Ascending aorta (tissue), 2 donors: ENCODE measurements at regions of chr3 and their contacts with region 1.

Region 1: DNA sequence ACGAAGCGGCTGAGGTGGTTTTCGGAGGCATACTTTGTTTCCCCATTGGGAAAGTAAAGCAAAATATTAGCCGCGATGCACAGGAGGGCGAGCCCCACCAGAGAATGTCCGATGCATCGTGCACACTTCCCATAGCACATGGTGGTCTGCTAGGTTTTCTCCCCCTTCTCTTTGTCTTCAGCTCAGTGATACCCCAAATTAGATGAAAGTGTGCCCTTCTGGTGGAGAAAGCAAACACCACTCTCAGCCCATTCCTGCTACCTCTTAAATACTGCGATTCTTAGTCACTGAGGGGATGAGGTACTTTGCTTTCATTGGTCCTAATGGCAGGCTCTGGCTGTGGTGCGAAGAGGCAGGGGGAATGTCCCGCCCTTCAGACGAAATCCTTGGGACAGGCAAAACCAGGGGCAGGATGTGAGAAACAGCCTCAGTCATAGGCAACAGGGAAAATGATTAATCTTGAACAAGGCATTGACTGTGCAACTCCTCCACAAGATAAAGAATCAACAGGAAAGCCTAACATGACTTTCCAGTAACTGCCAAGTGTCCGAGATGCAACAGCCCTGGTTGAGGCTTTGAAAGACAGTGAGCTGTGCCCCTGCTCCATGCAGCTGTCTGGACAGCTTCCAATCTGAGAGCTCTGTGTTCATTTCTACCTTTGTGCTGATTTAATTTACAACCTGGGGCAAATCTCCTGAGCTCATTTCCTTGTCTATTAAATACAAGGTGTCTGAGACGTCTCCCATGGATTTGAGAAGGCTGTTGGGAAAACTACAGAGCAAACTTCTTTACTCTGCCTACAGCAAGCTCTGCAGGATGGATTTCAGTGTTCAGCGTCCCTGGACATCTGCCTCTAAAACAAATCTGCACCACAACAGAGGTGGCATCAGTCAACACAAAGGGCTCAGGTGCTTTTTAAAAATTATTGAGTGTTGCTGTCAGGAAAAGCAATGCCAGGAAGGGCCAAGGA is at the start of gene TM4SF1:
- DNase-seq: peak; percentile 30 to 92
- H3K4me3 ChIP-seq: peak within 1 kb of the TSS; percentile 46 to 66
- H3K27ac ChIP-seq: peak within 1 kb of the TSS; percentile 74 to 83
- H3K4me1 ChIP-seq: peaks cover 14 to 40% of the 10 kb centered on the region in 2 donors
- H3K27me3 ChIP-seq: no peaks in the 10 kb centered on the region
- CTCF ChIP-seq: no peak
- total RNA-seq, gene TM4SF1: 487 TPM

Region 2: DNA sequence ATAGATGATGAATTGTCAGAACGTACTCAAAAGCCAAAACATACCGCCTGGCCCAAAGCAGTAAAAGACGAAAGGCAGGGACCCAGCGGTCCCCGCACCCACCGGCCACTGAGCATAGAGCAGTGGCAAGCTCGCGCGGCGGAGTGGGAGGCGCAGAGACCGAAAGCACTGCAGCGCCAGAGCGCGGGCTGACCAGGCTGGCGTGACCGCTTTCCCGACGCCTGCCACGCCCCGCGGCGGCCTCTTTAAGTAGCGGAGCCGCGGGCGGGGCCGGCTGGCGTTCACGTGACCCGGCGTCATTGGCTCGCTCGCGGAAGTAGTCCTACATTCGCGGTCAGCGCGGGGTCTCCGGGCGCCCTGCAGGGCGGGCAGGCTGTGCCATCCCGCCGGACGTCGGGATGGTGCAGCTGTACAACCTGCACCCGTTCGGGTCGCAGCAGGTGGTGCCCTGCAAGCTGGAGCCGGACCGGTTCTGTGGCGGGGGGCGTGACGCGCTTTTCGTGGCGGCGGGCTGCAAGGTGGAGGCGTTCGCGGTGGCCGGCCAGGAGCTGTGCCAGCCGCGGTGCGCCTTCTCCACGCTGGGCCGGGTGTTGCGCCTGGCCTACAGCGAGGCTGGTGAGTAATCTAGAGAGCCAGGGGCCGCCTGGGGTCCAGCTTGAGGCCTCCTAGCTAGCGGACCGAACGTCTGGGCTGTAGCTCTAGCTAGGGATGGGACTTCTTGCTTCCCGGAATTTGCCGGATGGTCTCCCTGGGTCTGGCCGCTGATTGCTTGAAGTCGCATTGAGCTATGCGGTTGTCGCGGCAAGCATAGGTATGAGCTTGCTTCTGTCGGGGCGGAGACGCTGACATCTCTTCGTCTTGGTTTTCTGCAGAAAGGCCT is 248.1 kb before region 1 on chr3 and contains the start of gene HPS3:
- intact Hi-C with region 1: loop called (anchors 10 kb)
- DNase-seq: peak; percentile 76 to 96
- H3K4me3 ChIP-seq: peak within 1 kb of the TSS; percentile 73 to 94
- H3K27ac ChIP-seq: peak within 1 kb of the TSS; percentile 87 to 89
- H3K4me1 ChIP-seq: peaks cover 0 to 12% of the 10 kb centered on the region in 2 donors
- H3K27me3 ChIP-seq: no peaks in the 10 kb centered on the region
- CTCF ChIP-seq: peak in 1 of 3 experiments; percentile 22
- total RNA-seq, gene HPS3: 18.9 TPM

Region 3: DNA sequence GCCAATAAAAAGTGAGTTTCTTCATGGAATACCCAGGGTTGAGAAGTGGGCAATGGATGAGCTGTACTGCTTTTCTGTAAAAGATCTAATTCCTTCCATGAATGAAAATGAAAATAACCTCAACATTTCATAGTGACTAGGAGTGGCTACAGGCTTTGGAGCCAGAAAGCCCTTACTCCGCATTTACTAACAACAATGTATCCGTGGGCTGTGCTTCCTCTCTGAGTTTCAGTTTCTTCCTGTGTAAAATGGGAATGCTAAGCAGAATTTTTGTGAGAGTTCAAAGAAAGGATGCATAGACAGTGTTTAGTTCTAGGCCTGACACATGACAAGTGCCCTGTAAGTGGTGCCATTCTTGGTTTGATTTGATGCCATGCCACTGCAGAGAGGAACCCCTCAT is 47.2 kb after region 1 on chr3:
- intact Hi-C with region 1: no loop called
- DNase-seq: no peak
- H3K4me3 ChIP-seq: no peak overlapping the region
- H3K27ac ChIP-seq: no peak overlapping the region
- H3K4me1 ChIP-seq: no peaks in the 10 kb centered on the region
- H3K27me3 ChIP-seq: no peaks in the 10 kb centered on the region
- CTCF ChIP-seq: no peak

Region 4: DNA sequence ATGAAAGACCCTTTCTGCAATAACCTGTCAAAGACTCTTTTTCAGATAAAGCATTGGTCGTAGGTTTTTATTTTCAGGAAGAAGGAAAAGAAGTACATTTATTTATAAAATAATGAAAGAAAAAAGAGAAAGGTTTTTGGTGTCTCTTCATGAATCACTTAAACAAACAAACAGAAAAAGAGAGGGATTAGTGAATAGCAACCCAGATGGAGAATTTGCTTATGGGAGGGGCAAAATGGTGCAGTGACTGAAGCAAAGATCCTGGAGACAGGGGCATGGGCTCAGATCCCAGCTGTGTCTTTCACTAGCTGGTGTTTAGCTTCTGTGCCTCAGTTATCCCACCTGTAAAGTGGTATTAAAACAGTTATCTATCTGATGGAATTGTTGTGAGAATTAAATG is 671.6 kb after region 1 on chr3:
- intact Hi-C with region 1: no loop called
- DNase-seq: no peak
- H3K4me3 ChIP-seq: no peak overlapping the region
- H3K27ac ChIP-seq: no peak overlapping the region
- H3K4me1 ChIP-seq: no peaks in the 10 kb centered on the region
- H3K27me3 ChIP-seq: no peaks in the 10 kb centered on the region
- CTCF ChIP-seq: no peak